HEK293T (cell line): ENCODE measurements at regions of chr2 and their contacts with region 1.

Region 1: GRCh38 chr2:241649404-241649803 is 11.9 kb downstream of the ATG4B start:
- DNase-seq: no peak

Region 2: GRCh38 chr2:241561833-241562232 is 87.6 kb before region 1 on chr2:
- CTCF ChIA-PET with region 1: no interaction called
- POLR2A ChIA-PET with region 1: no interaction called
- DNase-seq: no peak

Region 3: GRCh38 chr2:241620419-241620769 is 29.0 kb before region 1 on chr2:
- CTCF ChIA-PET with region 1: no interaction called
- POLR2A ChIA-PET with region 1: no interaction called
- DNase-seq: no peak

Region 4: GRCh38 chr2:241636255-241636999 is 13.0 kb before region 1 on chr2:
- CTCF ChIA-PET with region 1: interaction called, 10 read pairs
- POLR2A ChIA-PET with region 1: no interaction called
- DNase-seq: peak; percentile 39

Region 5: GRCh38 chr2:241858206-241859016 is 209.0 kb after region 1 on chr2 and contains the start of gene PDCD1:
- CTCF ChIA-PET with region 1: no interaction called
- POLR2A ChIA-PET with region 1: no interaction called
- DNase-seq: no peak